Common myeloid progenitor, CD34-positive (primary cell): ENCODE measurements at regions of chr2 and their contacts with region 1.

Region 1: DNA sequence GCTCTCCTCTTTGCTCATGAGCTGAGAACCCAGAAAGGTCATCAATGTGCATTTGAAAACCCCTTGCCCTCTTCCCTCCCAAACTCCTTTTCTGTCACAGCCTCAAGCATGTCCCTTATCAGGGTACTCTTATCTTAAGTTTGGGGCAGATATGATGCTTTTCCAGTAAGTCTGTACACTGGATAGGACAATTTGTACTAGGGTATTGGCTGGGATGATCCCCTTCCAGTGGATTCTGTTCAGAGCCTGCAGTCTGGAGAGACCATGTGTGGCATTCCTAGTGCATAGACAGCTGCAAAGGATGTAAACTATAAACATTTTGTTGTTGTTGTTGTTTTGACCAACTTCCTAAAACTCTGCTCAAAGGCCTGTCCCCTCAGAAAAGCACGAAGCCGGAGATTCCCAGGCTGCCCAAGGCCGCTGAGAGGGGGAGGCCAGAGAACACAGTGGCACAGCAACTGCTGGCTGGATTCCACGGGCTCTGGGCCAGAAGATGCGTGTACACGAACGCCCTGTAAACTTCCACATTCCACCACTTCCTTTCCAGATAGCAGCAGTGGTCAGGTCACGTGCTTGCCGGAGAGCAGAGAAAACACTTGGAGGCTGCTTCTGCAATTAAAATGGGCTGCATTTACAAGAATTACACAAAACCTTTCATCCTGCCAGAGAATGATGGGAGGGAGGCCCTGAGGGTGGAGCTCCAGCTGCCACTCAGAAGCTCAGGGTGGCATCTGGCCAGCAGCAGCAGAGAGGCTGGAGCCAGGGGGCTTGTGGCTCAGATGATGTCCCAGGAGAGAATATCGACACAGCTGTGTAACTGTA is 42.1 kb downstream of the BMP10 start:
- DNase-seq: peak; percentile 97 to 99 (median 99)
- H3K4me3 ChIP-seq: peak overlapping the region in 3 of 7 experiments; percentile 3 to 52 (median 23)
- H3K27ac ChIP-seq: peak overlapping the region in 1 of 2 experiments; percentile 56
- H3K4me1 ChIP-seq: peaks cover 38 to 68% (median 62%) of the 10 kb centered on the region in 4 experiments
- H3K27me3 ChIP-seq: no peaks in the 10 kb centered on the region

Region 2: DNA sequence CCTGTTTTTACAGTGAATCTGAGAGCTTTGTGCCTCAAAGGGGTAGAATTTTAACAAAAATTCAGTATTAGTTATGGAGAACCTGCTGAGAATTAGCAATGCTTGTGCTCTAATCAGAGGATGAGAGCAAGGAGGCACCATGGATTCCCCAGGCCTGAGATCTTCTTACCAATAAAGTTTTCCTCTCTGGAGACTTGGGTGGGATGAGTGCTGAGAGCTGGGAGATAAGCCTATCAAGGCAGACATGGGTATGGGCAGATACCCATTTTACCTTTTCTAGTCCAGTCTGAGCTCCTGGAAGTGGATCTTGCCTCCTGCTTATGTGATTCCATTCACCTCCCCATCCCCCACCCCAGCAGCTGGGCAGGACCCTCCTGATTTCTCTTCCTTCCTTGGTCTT is 11.8 kb before region 1 on chr2:
- CTCF ChIA-PET with region 1: interaction called, 25 read pairs
- POLR2A ChIA-PET with region 1: no interaction called
- DNase-seq: no peak
- H3K4me3 ChIP-seq: no peak overlapping the region
- H3K27ac ChIP-seq: no peak overlapping the region
- H3K4me1 ChIP-seq: peaks cover 0 to 11% (median under 1%) of the 10 kb centered on the region in 4 experiments
- H3K27me3 ChIP-seq: no peaks in the 10 kb centered on the region

Region 3: GRCh38 chr2:68849579-68850030 is 20.5 kb after region 1 on chr2:
- CTCF ChIA-PET with region 1: no interaction called
- POLR2A ChIA-PET with region 1: no interaction called
- DNase-seq: no peak
- H3K4me3 ChIP-seq: no peak overlapping the region
- H3K27ac ChIP-seq: no peak overlapping the region
- H3K4me1 ChIP-seq: no peaks in the 10 kb centered on the region
- H3K27me3 ChIP-seq: no peaks in the 10 kb centered on the region

Region 4: GRCh38 chr2:68909793-68910674 is 80.9 kb after region 1 on chr2:
- CTCF ChIA-PET with region 1: interaction called, 12 read pairs
- POLR2A ChIA-PET with region 1: no interaction called
- DNase-seq: peak; percentile 85 to 91 (median 88)
- H3K4me3 ChIP-seq: no peak overlapping the region
- H3K27ac ChIP-seq: no peak overlapping the region
- H3K4me1 ChIP-seq: peaks cover 11 to 74% (median 65%) of the 10 kb centered on the region in 4 experiments
- H3K27me3 ChIP-seq: no peaks in the 10 kb centered on the region